ENCODE measurements at regions of chr15 and their contacts with region 1.

Region 1: GRCh38 chr15:88467073-88467934 is at the starts of genes MRPL46 and MRPS11:
- DNase-seq: peak; percentile 94
- ATAC-seq: peak; percentile 84
- H3K4me3 Mint-ChIP-seq: peak within 1 kb of the TSS; percentile 86
- H3K27ac Mint-ChIP-seq: peak within 1 kb of the TSS; percentile 98
- H3K4me1 Mint-ChIP-seq: peaks cover 26% of the 10 kb centered on the region
- H3K27me3 Mint-ChIP-seq: no peaks in the 10 kb centered on the region
- total RNA-seq, gene MRPL46: 31.0 to 35.6 TPM
- total RNA-seq, gene MRPS11: 58.3 to 67.1 TPM

Region 2: GRCh38 chr15:88546248-88547129 is 79.2 kb after region 1 on chr15 and contains the start of gene DET1:
- CTCF ChIA-PET with region 1: no interaction called
- POLR2A ChIA-PET with region 1: no interaction called
- intact Hi-C with region 1: loop called (anchors 1 kb)
- DNase-seq: peak; percentile 98
- ATAC-seq: peak; percentile 97
- H3K4me3 Mint-ChIP-seq: peak within 1 kb of the TSS; percentile 83
- H3K27ac Mint-ChIP-seq: peak within 1 kb of the TSS; percentile 91
- H3K4me1 Mint-ChIP-seq: peaks cover 13% of the 10 kb centered on the region
- H3K27me3 Mint-ChIP-seq: no peaks in the 10 kb centered on the region
- total RNA-seq, gene DET1: 2.7 to 3.0 TPM

Region 3: DNA sequence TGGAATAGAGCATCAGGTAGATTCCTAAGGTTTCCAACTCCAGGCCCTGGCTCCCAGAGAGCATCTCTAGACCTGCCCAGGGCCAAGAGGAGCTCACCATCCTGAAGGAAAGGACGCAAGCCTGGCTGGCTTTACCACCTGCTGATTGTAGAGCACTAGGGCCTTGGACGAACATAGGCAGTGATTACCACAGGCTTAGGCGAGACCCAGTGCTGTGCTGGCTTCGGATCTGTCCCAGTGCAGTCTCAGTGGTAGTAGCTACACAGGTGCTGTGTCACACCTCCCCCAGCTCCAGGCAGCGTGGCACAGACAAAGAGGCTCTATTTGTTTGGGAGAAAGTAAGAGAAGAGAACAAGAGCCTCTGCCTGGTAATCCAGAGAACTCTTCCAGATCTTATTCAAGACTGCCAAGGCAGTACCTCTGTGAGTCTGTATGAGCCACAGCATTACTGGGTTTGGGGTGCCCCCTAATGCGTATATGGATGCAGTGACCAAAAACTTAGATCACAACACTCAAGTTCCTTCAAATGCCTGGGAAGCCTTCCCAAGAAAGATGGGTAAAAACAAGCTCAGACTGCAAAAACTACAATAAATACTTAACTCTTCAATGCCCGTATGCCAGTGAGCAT is 197.0 kb after region 1 on chr15:
- CTCF ChIA-PET with region 1: no interaction called
- POLR2A ChIA-PET with region 1: interaction called, 3 read pairs
- intact Hi-C with region 1: loop called in 1 of 2 experiments (anchors 2 kb)
- DNase-seq: peak; percentile 68
- ATAC-seq: peak; percentile 90
- H3K4me3 Mint-ChIP-seq: no peak overlapping the region
- H3K27ac Mint-ChIP-seq: no peak overlapping the region
- H3K4me1 Mint-ChIP-seq: peaks cover 32% of the 10 kb centered on the region
- H3K27me3 Mint-ChIP-seq: peaks cover 5% of the 10 kb centered on the region